Activated T-helper 2 cell treated with anti-CD3 and anti-CD28 coated beads, Interferon-gamma antibody, Interleukin-2, Interleukin-4, amounts not matched to agents 10 μg/mL and 5 μg/mL and 100 μg/mL, durations not matched to agents 14 hours and 24 hours and 36 hours (primary cell): ENCODE measurements at regions of chr12 and their contacts with region 1.

Region 1: GRCh38 chr12:47819896-47820630 is at the start of gene HDAC7:
- DNase-seq: peak; percentile 56
- H3K4me3 Mint-ChIP-seq: peak within 1 kb of the TSS; percentile 88
- H3K27ac Mint-ChIP-seq: peak within 1 kb of the TSS; percentile 100
- H3K4me1 Mint-ChIP-seq: peaks cover 59% of the 10 kb centered on the region
- H3K27me3 Mint-ChIP-seq: no peaks in the 10 kb centered on the region
- total RNA-seq, gene HDAC7: 251 and 253 TPM in 2 replicates

Region 2: GRCh38 chr12:47705566-47706425 is 114.3 kb before region 1 on chr12 and contains the start of gene RPAP3:
- intact Hi-C with region 1: no loop called
- DNase-seq: peak; percentile 96
- H3K4me3 Mint-ChIP-seq: peak within 1 kb of the TSS; percentile 96
- H3K27ac Mint-ChIP-seq: peak within 1 kb of the TSS; percentile 98
- H3K4me1 Mint-ChIP-seq: peaks cover 55% of the 10 kb centered on the region
- H3K27me3 Mint-ChIP-seq: no peaks in the 10 kb centered on the region
- total RNA-seq, gene RPAP3: 57.4 and 58.7 TPM in 2 replicates

Region 3: DNA sequence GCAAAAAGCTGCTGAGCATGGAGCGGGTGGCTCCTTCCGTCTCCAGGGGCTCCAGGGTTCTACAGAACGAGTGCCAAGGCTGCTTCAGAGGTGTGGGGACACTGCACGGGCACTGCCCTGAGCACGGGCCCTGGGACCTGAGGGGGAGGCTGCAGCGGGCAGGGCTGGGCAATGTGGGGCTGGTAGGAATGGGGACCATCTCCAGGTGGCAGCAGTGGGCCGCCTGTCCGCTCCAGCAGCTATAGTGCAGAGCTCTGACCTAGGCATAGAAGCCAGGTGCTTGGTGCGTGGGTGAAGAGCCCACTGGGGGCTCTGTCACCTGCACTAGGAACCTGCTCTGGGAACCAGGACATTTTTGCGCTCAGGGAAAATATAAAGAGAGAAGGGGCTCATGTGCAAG is 22.6 kb before region 1 on chr12:
- intact Hi-C with region 1: no loop called
- DNase-seq: no peak
- H3K4me3 Mint-ChIP-seq: no peak overlapping the region
- H3K27ac Mint-ChIP-seq: peak overlapping the region; percentile 52
- H3K4me1 Mint-ChIP-seq: peaks cover 26% of the 10 kb centered on the region
- H3K27me3 Mint-ChIP-seq: no peaks in the 10 kb centered on the region

Region 4: GRCh38 chr12:47832263-47832933 is 12.3 kb after region 1 on chr12:
- intact Hi-C with region 1: loop called (anchors 1 kb)
- DNase-seq: no peak
- H3K4me3 Mint-ChIP-seq: peak overlapping the region; percentile 76
- H3K27ac Mint-ChIP-seq: peak overlapping the region; percentile 98
- H3K4me1 Mint-ChIP-seq: peaks cover 76% of the 10 kb centered on the region
- H3K27me3 Mint-ChIP-seq: no peaks in the 10 kb centered on the region